ENCODE measurements at regions of chr5 and their contacts with region 1.

Region 1: GRCh38 chr5:54852007-54852406 is 133.4 kb downstream of the ESM1 start:
- DNase-seq: no peak
- CTCF ChIP-seq: no peak

Region 2: GRCh38 chr5:54520438-54520846 is 331.6 kb before region 1 on chr5:
- in situ Hi-C with region 1: loop called (anchors 10 kb)
- DNase-seq: no peak
- CTCF ChIP-seq: no peak

Region 3: DNA sequence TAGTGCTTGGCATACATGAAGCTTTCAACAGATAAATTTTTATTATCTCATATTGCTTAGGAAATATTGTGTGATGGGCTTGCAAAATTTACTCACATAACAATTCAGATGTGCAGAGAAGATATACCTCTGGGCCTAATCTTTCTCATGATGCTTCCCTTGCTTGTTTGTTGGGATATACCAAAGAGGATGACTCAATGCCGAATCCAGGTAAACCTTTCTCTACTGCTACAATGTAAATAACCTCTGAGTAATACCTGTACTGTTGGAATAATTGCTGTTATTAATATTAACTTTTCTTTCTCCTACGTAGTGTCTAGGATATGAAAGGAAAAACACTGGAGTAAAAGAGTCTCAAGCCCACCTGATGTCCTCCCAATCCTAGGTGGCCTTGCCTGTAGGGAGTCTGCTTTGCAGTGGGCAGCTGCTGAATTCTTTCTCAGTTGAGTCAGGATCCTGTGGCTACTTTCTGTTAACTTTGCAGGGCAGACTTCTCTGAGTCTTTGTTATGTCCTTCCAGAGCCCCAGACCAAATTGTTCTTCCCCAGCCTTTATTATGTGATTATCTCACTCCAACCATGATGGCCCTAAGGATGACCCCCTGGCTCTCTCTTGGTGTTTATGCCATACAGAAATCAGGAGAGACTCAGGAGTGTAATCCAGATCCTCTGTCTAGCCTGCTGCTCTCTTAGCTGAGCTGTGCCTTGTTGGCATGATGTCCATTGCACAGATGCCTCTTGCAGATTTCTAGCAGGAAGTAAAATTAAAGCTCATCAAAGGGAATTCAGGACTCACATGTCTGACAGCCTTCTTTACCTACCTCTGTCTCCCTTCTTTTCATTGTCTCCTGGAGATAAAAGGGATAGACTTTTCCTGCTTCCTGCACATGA is 126.4 kb before region 1 on chr5:
- in situ Hi-C with region 1: no loop called
- DNase-seq: no peak
- CTCF ChIP-seq: no peak

Region 4: DNA sequence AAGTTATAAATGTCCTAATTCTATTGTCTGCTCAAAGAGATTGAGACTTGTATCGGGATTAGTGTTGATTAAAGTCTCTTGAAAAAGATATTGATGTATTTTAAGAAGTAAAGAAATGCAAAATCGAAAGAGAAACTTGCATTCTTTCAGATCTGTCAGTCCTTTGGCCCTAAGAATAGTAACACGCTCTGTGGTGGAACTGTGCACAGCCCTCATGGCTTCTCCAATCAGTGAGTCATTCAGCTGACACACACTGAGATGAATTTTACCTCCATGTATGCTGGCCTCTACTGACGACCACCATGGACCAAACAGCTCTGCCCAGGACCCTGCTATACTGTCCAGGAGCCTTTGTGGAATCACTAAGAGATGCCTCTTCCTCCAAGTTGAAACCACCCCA is 99.0 kb before region 1 on chr5:
- in situ Hi-C with region 1: no loop called
- DNase-seq: peak; percentile 44
- CTCF ChIP-seq: no peak

Measured in GM13976 (cell line).